ENCODE measurements at regions of chr20 and their contacts with region 1.

Region 1: GRCh38 chr20:53957451-53958172 is 112.8 kb downstream of the BCAS1 start:
- DNase-seq: no peak
- ATAC-seq: no peak
- H3K4me3 ChIP-seq: no peak overlapping the region
- H3K4me3 Mint-ChIP-seq: no peak overlapping the region
- H3K27ac ChIP-seq: no peak overlapping the region
- H3K27ac Mint-ChIP-seq: no peak overlapping the region
- H3K4me1 ChIP-seq: peaks cover 0 to 4% of the 10 kb centered on the region in 2 experiments
- H3K4me1 Mint-ChIP-seq: peaks cover 2 to 13% (median 5%) of the 10 kb centered on the region in 3 donors
- H3K27me3 ChIP-seq: no peaks in the 10 kb centered on the region
- H3K27me3 Mint-ChIP-seq: peaks cover 0 to 7% of the 10 kb centered on the region in 2 donors

Region 2: DNA sequence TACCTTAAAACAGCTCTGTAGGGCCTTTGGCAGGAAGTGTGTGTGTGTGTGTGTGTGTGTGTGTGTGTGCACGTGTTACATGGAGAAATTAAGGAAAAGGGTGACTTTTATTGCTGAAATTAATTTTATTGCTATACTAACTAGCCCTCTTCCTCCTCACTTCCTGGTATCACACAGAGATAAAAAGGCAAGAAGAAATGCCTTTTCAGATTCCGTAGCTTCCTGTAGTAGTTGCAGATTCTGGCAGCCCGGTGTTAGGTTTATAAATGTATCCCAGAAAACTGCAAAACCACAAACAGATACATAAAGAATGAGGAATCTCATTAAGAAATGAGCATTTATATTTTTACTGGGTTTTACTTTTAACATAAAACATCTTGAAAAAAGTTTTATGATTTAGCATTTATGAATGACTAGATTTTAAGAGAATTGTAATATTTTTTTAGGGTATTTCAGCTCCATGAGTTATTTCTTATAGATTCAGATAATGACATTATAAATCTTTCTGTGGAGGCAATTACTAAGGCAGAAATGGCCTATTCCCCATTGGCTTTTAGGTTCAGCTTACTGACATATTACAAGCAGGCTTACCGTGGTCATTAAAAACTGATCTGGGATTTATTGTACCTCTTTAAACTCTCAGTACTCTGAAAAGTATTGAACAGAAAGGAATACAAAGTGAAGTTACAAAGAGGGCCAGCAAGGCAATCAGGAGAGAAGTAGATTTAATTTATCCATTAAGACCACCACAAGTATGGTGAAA is 1234.5 kb before region 1 on chr20:
- CTCF ChIA-PET with region 1: interaction called in 1 of 2 experiments, 10 read pairs
- POLR2A ChIA-PET with region 1: no interaction called
- DNase-seq: no peak
- ATAC-seq: no peak
- H3K4me3 ChIP-seq: no peak overlapping the region
- H3K4me3 Mint-ChIP-seq: no peak overlapping the region
- H3K27ac ChIP-seq: no peak overlapping the region
- H3K27ac Mint-ChIP-seq: no peak overlapping the region
- H3K4me1 ChIP-seq: no peaks in the 10 kb centered on the region
- H3K4me1 Mint-ChIP-seq: peaks cover 0 to 7% (median 2%) of the 10 kb centered on the region in 3 donors
- H3K27me3 ChIP-seq: no peaks in the 10 kb centered on the region
- H3K27me3 Mint-ChIP-seq: peaks cover 0 to 10% of the 10 kb centered on the region in 2 donors

Region 3: DNA sequence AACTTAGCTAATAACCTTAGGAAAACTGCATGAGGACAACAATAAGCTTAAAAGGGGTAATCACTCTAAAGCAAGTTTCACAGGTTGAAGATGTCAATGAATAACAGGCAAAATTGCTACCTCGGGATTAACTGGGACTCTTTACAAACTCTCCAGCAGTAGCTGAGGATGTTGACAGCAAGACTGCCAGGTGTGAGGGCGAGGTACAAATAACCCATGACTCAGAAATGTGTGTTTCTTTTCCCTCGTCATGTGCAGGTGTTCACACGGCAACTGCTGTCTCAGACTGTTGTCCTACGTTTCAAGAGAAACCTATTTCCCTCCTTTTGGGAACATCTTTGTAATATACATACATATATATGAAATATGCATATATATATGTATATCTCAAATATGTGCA is 96.9 kb after region 1 on chr20:
- CTCF ChIA-PET with region 1: no interaction called
- POLR2A ChIA-PET with region 1: no interaction called
- DNase-seq: no peak
- ATAC-seq: no peak
- H3K4me3 ChIP-seq: no peak overlapping the region
- H3K4me3 Mint-ChIP-seq: no peak overlapping the region
- H3K27ac ChIP-seq: no peak overlapping the region
- H3K27ac Mint-ChIP-seq: no peak overlapping the region
- H3K4me1 ChIP-seq: no peaks in the 10 kb centered on the region
- H3K4me1 Mint-ChIP-seq: no peaks in the 10 kb centered on the region
- H3K27me3 ChIP-seq: peaks cover 0 to 2% of the 10 kb centered on the region in 2 experiments
- H3K27me3 Mint-ChIP-seq: peaks cover 7 to 19% of the 10 kb centered on the region in 2 donors

Region 4: DNA sequence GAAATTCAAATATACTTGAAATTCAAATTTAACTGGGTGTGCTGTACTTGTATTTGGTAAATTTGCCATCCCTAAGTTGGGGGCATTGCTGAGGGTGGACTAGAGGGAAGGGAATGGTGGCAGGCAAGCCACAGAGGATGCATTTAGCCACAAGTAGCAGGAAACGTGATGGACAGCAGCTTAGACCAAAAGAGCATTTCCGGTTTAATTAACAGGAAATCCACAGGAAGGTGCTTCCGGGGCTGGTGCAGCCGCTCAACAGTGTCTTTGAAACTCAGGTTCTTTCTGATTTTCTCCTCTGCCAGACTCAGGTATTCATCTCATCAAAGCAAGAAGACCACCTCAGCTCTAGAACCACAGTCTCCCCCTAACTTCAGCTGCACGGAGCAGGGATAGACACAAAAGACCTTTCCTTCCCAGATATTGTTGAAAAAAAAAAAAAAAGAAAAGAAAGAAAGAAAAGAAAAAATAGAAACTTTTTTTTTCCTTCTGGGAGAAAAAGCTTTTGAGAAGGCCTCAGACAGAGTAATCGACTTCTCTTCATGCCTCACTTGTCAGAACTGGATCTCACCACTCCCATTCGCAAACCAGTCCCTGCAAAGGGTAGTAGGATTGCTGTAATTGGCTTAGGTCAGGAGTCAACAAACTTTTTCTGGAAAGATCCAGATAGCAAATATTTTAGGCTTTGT is 120.8 kb after region 1 on chr20:
- CTCF ChIA-PET with region 1: no interaction called
- POLR2A ChIA-PET with region 1: interaction called in 1 of 2 experiments, 10 read pairs
- DNase-seq: peak in 8 of 35 experiments; percentile 1 to 40 (median 19)
- ATAC-seq: peak; percentile 32 to 79 (median 54)
- H3K4me3 ChIP-seq: no peak overlapping the region
- H3K4me3 Mint-ChIP-seq: peak overlapping the region in 2 of 3 donors; percentile 54 to 62
- H3K27ac ChIP-seq: peak overlapping the region; percentile 3
- H3K27ac Mint-ChIP-seq: peak overlapping the region; percentile 89 to 90
- H3K4me1 ChIP-seq: peaks cover 11 to 18% of the 10 kb centered on the region in 2 experiments
- H3K4me1 Mint-ChIP-seq: peaks cover 30 to 39% (median 30%) of the 10 kb centered on the region in 3 donors
- H3K27me3 ChIP-seq: no peaks in the 10 kb centered on the region
- H3K27me3 Mint-ChIP-seq: no peaks in the 10 kb centered on the region

Measured in T-cell (primary cell).